ENCODE measurements at regions of chr9 and their contacts with region 1.

Region 1: GRCh38 chr9:91047993-91048607 is 246.5 kb downstream of the SYK start:
- DNase-seq: peak; percentile 56
- H3K4me3 Mint-ChIP-seq: peak overlapping the region; percentile 28
- H3K27ac Mint-ChIP-seq: peak overlapping the region; percentile 90
- H3K4me1 Mint-ChIP-seq: peaks cover 73% of the 10 kb centered on the region
- H3K27me3 Mint-ChIP-seq: no peaks in the 10 kb centered on the region

Region 2: DNA sequence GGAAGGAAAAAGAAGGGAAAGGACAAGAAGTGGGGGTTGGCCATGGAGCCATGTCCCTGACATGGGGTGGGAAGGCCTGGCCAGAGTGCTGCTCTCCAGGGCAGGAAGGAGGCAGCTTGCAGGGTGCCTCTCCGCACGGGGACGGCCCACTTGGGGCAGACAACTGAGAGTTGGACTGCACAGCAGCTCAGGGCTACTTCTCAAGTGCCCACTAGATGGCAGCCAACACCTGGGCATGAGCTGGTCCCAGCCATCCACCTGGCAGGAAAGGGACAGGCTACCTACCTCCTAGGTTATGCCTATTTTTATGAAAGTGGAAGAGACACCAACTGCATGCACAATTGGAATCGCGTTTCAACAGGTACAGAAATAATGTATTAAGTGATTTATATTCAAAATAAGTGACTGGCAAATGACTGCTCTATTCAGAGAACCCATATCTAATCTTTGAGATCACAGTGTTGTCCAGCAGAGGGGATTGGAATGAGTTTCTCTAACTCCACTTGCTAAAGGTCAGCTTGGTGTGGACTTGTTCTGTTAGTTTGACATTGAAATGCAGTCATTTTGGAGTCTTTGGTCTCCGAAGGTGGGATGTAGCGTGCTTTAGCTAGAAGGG is 133.1 kb before region 1 on chr9:
- intact Hi-C with region 1: loop called (anchors 5 kb)
- DNase-seq: peak; percentile 54
- H3K4me3 Mint-ChIP-seq: no peak overlapping the region
- H3K27ac Mint-ChIP-seq: peak overlapping the region; percentile 62
- H3K4me1 Mint-ChIP-seq: peaks cover 14% of the 10 kb centered on the region
- H3K27me3 Mint-ChIP-seq: no peaks in the 10 kb centered on the region

Region 3: GRCh38 chr9:90991953-90992352 is 56.1 kb before region 1 on chr9:
- intact Hi-C with region 1: no loop called
- DNase-seq: no peak
- H3K4me3 Mint-ChIP-seq: no peak overlapping the region
- H3K27ac Mint-ChIP-seq: no peak overlapping the region
- H3K4me1 Mint-ChIP-seq: no peaks in the 10 kb centered on the region
- H3K27me3 Mint-ChIP-seq: no peaks in the 10 kb centered on the region

Region 4: GRCh38 chr9:91036826-91037510 is 11.1 kb before region 1 on chr9:
- intact Hi-C with region 1: loop called (anchors 1 kb)
- DNase-seq: peak; percentile 79
- H3K4me3 Mint-ChIP-seq: peak overlapping the region; percentile 49
- H3K27ac Mint-ChIP-seq: peak overlapping the region; percentile 88
- H3K4me1 Mint-ChIP-seq: peaks cover 61% of the 10 kb centered on the region
- H3K27me3 Mint-ChIP-seq: no peaks in the 10 kb centered on the region

Region 5: GRCh38 chr9:91101611-91102168 is 53.6 kb after region 1 on chr9:
- intact Hi-C with region 1: loop called (anchors 1 kb)
- DNase-seq: peak; percentile 85
- H3K4me3 Mint-ChIP-seq: peak overlapping the region; percentile 78
- H3K27ac Mint-ChIP-seq: peak overlapping the region; percentile 93
- H3K4me1 Mint-ChIP-seq: peaks cover 64% of the 10 kb centered on the region
- H3K27me3 Mint-ChIP-seq: no peaks in the 10 kb centered on the region

Region 6: GRCh38 chr9:91346652-91347051 is 298.6 kb after region 1 on chr9:
- intact Hi-C with region 1: loop called (anchors 5 kb)
- DNase-seq: no peak
- H3K4me3 Mint-ChIP-seq: no peak overlapping the region
- H3K27ac Mint-ChIP-seq: peak overlapping the region; percentile 44
- H3K4me1 Mint-ChIP-seq: peaks cover 61% of the 10 kb centered on the region
- H3K27me3 Mint-ChIP-seq: no peaks in the 10 kb centered on the region